ENCODE measurements at regions of chr1 and their contacts with region 1.

Region 1: GRCh38 chr1:206725109-206725963 is 40.6 kb downstream of the MAPKAPK2 start:
- DNase-seq: peak; percentile 77
- H3K4me3 Mint-ChIP-seq: no peak overlapping the region
- H3K27ac Mint-ChIP-seq: peak overlapping the region; percentile 33
- H3K4me1 Mint-ChIP-seq: peaks cover 50% of the 10 kb centered on the region
- H3K27me3 Mint-ChIP-seq: no peaks in the 10 kb centered on the region

Region 2: DNA sequence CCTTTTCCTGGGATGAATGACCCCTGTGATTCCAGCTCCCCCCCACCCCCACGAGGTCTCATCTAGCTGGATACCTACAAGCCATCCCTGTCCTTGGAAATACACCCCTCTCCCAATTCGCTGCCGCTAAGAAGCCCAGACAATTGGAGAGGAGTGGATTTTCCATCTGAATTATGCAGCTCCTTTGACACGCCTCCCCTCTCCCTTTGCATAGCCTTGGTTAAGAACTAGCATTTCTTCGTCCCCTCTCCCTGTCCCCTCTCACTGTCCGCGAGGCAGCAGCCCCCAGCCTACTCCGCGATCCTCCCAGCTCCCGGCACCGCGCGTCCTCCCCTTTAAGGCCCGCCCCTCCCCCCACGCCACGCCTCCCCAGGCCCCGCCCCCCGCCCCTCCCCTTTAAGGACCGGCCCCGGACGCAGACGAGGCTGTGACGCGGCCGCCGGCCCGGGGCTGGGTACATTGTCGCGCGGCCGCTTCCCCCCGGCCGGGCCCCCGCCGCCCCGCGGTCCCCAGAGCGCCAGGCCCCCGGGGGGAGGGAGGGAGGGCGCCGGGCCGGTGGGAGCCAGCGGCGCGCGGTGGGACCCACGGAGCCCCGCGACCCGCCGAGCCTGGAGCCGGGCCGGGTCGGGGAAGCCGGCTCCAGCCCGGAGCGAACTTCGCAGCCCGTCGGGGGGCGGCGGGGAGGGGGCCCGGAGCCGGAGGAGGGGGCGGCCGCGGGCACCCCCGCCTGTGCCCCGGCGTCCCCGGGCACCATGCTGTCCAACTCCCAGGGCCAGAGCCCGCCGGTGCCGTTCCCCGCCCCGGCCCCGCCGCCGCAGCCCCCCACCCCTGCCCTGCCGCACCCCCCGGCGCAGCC is 40.6 kb before region 1 on chr1 and contains the start of gene MAPKAPK2:
- CTCF ChIA-PET with region 1: interaction called, 22 read pairs
- POLR2A ChIA-PET with region 1: no interaction called
- intact Hi-C with region 1: no loop called
- DNase-seq: peak; percentile 83
- H3K4me3 Mint-ChIP-seq: peak within 1 kb of the TSS; percentile 90
- H3K27ac Mint-ChIP-seq: peak within 1 kb of the TSS; percentile 95
- H3K4me1 Mint-ChIP-seq: peaks cover 58% of the 10 kb centered on the region
- H3K27me3 Mint-ChIP-seq: peaks cover 1% of the 10 kb centered on the region
- total RNA-seq, gene MAPKAPK2: 96.9 to 97.4 TPM

Region 3: GRCh38 chr1:206706298-206706791 is 19.0 kb before region 1 on chr1:
- CTCF ChIA-PET with region 1: interaction called, 34 read pairs
- POLR2A ChIA-PET with region 1: no interaction called
- intact Hi-C with region 1: no loop called
- DNase-seq: peak; percentile 88
- H3K4me3 Mint-ChIP-seq: no peak overlapping the region
- H3K27ac Mint-ChIP-seq: peak overlapping the region; percentile 83
- H3K4me1 Mint-ChIP-seq: peaks cover 87% of the 10 kb centered on the region
- H3K27me3 Mint-ChIP-seq: no peaks in the 10 kb centered on the region

Region 4: DNA sequence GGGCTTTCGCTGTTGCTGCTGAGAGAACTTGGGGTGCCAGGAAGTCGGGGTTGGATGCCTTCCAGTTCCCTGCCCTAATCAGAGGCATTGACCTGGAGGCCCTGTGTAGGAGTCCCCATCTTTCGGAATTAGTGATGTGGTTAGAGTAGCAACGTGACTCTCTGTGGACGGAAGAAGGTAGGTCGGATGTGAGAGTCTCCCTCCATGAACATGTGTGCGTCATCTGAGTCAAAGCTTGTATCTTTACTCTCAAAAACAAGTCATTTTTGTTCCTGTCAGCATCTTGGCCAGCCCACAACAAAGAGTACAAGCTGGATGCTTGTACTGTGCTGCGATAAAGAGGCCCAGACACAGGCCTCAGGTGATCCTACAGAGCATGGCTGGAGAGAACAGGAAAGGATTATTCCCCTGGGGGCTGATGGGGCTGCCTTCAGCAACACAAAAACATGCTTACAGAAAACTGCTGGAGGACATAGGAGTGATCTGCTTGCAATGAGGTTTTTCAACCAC is 77.9 kb after region 1 on chr1:
- CTCF ChIA-PET with region 1: interaction called, 137 read pairs
- POLR2A ChIA-PET with region 1: interaction called, 3 read pairs
- intact Hi-C with region 1: loop called (anchors 1 kb)
- DNase-seq: peak; percentile 89
- H3K4me3 Mint-ChIP-seq: peak overlapping the region; percentile 35
- H3K27ac Mint-ChIP-seq: peak overlapping the region; percentile 66
- H3K4me1 Mint-ChIP-seq: peaks cover 79% of the 10 kb centered on the region
- H3K27me3 Mint-ChIP-seq: peaks cover 13% of the 10 kb centered on the region

Region 5: DNA sequence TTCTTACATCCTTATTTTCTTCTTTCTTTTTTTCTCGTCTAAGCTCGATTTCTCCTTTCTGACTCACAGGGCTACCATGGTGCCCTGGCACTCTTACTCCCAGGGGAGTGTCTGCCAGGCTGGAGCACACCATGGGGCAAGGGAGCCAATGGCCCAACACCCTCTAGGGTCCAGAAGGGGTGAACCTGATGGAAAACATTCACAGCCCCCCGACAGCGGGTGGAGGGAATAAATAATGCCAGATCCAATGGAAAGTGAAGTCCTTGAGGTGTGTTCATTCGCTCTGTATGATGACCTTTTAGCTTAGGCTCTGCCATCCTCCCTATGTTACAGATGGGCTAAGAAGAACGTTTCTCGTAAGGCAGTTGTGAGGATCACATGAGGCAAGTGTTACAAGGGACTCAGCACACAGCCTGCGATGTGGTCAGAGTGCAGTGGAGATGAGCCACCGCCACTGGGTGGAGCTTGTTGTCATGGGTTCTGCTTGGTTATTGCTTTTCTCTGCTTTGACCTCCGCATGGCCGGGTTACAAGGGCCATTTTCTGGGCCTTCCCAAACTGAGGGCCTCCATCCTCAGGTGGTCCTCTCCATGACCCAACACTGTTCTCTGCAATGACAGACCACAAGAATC is 199.9 kb after region 1 on chr1:
- CTCF ChIA-PET with region 1: interaction called, 125 read pairs
- POLR2A ChIA-PET with region 1: no interaction called
- intact Hi-C with region 1: no loop called
- DNase-seq: peak; percentile 82
- H3K4me3 Mint-ChIP-seq: no peak overlapping the region
- H3K27ac Mint-ChIP-seq: no peak overlapping the region
- H3K4me1 Mint-ChIP-seq: peaks cover 33% of the 10 kb centered on the region
- H3K27me3 Mint-ChIP-seq: no peaks in the 10 kb centered on the region

Region 6: DNA sequence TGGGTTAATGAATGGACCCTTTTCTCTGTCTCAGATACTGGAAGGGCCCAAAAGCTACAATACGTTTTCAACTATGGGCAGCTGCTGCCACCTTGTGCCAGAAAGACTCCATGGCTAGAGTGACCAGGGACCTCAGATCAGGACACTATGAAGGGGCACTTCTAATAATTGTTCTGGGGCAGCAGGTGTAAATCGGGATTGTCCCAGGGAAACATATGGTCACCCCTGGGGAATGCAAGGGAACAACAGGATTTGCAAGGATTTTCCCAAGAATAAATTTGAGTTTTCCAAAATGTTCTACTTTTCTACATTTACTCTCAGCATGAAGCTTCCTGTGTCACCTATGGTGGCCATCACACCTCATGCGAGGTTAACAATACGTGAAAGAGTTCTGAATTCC is 256.9 kb after region 1 on chr1:
- CTCF ChIA-PET with region 1: interaction called, 36 read pairs
- POLR2A ChIA-PET with region 1: no interaction called
- intact Hi-C with region 1: loop called (anchors 5 kb)
- DNase-seq: peak; percentile 72
- H3K4me3 Mint-ChIP-seq: no peak overlapping the region
- H3K27ac Mint-ChIP-seq: no peak overlapping the region
- H3K4me1 Mint-ChIP-seq: no peaks in the 10 kb centered on the region
- H3K27me3 Mint-ChIP-seq: peaks cover 15% of the 10 kb centered on the region

Measured in activated CD4-positive, alpha-beta memory T cell treated with anti-CD3 and anti-CD28 coated beads for 36 hours (primary cell).